Ovary (tissue), 10 donors: ENCODE measurements at regions of chr12 and their contacts with region 1.

Region 1: DNA sequence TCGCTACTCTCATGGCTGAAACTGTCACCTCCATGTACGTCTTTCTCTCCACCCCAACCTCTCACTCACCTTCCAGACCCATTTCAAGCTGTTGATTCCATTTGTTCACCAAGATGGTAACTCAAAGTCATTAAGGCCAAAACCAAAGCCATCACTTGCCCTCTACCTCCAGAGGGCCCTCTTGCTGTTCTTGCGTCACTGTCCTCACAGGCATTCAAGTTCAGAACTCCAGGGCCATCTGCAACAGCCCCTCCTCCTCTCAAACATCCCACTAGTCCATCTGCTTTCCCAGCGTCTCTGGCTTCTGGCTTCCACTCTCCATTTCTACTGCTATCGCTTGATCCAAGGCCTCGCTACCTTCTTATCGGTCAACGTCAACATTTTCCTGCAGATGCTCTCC is 74.5 kb downstream of the VWF start:
- DNase-seq: no peak
- H3K4me3 ChIP-seq: no peak overlapping the region
- H3K27ac ChIP-seq: no peak overlapping the region
- H3K4me1 ChIP-seq: peaks cover 1% of the 10 kb centered on the region
- H3K27me3 ChIP-seq: no peaks in the 10 kb centered on the region
- CTCF ChIP-seq: no peak
- EP300 ChIP-seq: no peak
- POLR2A ChIP-seq: no peak

Region 2: GRCh38 chr12:5889381-5890047 is 160.5 kb before region 1 on chr12:
- intact Hi-C with region 1: no loop called
- DNase-seq: no peak
- H3K4me3 ChIP-seq: no peak overlapping the region
- H3K27ac ChIP-seq: no peak overlapping the region
- H3K4me1 ChIP-seq: no peaks in the 10 kb centered on the region
- H3K27me3 ChIP-seq: no peaks in the 10 kb centered on the region
- CTCF ChIP-seq: no peak
- EP300 ChIP-seq: no peak
- POLR2A ChIP-seq: no peak

Region 3: GRCh38 chr12:6099316-6099715 is 49.3 kb after region 1 on chr12:
- intact Hi-C with region 1: loop called in 1 of 4 experiments (anchors 2 kb)
- DNase-seq: no peak
- H3K4me3 ChIP-seq: no peak overlapping the region
- H3K27ac ChIP-seq: no peak overlapping the region
- H3K4me1 ChIP-seq: no peaks in the 10 kb centered on the region
- H3K27me3 ChIP-seq: no peaks in the 10 kb centered on the region
- CTCF ChIP-seq: no peak
- EP300 ChIP-seq: no peak
- POLR2A ChIP-seq: no peak